PC-3 (cell line): ENCODE measurements at regions of chr2 and their contacts with region 1.

Region 1: DNA sequence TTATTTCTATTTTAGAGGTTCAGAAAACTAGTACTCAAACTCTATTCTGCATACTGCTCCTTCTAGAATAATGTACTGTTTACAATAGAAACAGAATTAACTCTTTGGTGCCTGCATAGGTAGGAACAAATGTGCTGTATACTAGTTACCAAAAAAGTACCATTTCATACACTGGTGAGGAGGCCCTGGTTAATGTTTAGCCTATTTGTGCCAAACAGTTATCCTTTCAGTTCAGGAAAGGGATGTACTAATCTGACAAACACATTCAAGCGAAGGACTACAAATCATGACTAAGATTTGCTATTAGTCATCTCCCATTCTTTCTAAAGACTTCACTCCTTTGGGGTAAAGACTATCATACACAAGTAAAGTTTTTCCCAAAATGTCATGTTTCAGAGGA is 47.4 kb downstream of the EXOC6B start:
- DNase-seq: peak; percentile 84
- ATAC-seq: peak; percentile 90
- H3K4me3 ChIP-seq: no peak overlapping the region
- H3K27ac ChIP-seq: peak overlapping the region; percentile 2; the same call in 1 of the 2 replicates
- H3K4me1 ChIP-seq: peaks cover 30% of the 10 kb centered on the region
- H3K27me3 ChIP-seq: no peaks in the 10 kb centered on the region
- CTCF ChIP-seq: no peak

Region 2: DNA sequence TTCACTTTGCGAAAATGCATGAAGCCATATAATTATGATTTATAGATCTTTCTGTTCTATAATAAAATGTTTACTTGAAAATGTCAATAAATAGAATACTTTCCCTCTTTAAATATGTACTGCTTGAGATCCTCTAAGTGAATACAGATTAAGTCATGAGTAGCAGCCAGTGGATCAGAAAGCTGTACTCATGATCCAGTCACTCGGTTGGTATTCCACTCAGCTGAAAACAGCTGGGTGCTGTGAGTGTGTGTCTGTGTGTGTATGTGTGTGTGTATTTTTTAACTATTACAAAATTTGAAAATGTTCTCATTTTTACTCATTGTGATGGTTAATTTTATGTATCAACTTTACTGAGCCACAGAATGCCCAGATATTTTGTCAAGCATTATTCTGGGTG is 489.1 kb before region 1 on chr2:
- CTCF ChIA-PET with region 1: no interaction called
- POLR2A ChIA-PET with region 1: no interaction called
- intact Hi-C with region 1: no loop called
- DNase-seq: peak; percentile 26
- ATAC-seq: no peak
- H3K4me3 ChIP-seq: no peak overlapping the region
- H3K27ac ChIP-seq: peak overlapping the region; percentile 63
- H3K4me1 ChIP-seq: peaks cover 30% of the 10 kb centered on the region
- H3K27me3 ChIP-seq: no peaks in the 10 kb centered on the region
- CTCF ChIP-seq: no peak

Region 3: GRCh38 chr2:72757177-72757775 is 21.1 kb before region 1 on chr2:
- CTCF ChIA-PET with region 1: no interaction called
- POLR2A ChIA-PET with region 1: no interaction called
- intact Hi-C with region 1: no loop called
- DNase-seq: no peak
- ATAC-seq: no peak
- H3K4me3 ChIP-seq: no peak overlapping the region
- H3K27ac ChIP-seq: no peak overlapping the region
- H3K4me1 ChIP-seq: no peaks in the 10 kb centered on the region
- H3K27me3 ChIP-seq: no peaks in the 10 kb centered on the region
- CTCF ChIP-seq: no peak

Region 4: DNA sequence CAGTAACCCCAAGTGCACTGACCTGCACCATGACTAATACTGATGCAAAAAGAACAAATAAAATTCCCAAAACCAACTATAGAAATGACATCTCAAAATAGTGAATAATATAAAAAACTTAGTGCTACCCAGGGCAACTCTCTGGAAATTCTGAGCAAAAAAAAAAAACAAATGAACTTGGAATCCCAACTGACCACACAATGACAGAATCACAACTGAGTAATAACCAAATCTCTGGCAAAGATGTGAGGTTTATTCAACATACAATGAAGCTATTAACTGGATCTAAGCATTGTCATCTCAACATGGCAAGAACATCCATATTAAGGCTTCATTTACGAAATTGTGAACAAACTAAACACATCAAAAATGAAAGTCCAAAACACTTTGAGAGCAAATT is 24.7 kb after region 1 on chr2:
- CTCF ChIA-PET with region 1: interaction called, 3 read pairs
- POLR2A ChIA-PET with region 1: no interaction called
- intact Hi-C with region 1: loop called (anchors 1 kb)
- DNase-seq: peak; percentile 44
- ATAC-seq: peak; percentile 45
- H3K4me3 ChIP-seq: no peak overlapping the region
- H3K27ac ChIP-seq: no peak overlapping the region
- H3K4me1 ChIP-seq: peaks cover 8% of the 10 kb centered on the region; the same call in 1 of the 2 replicates
- H3K27me3 ChIP-seq: no peaks in the 10 kb centered on the region
- CTCF ChIP-seq: no peak

Region 5: DNA sequence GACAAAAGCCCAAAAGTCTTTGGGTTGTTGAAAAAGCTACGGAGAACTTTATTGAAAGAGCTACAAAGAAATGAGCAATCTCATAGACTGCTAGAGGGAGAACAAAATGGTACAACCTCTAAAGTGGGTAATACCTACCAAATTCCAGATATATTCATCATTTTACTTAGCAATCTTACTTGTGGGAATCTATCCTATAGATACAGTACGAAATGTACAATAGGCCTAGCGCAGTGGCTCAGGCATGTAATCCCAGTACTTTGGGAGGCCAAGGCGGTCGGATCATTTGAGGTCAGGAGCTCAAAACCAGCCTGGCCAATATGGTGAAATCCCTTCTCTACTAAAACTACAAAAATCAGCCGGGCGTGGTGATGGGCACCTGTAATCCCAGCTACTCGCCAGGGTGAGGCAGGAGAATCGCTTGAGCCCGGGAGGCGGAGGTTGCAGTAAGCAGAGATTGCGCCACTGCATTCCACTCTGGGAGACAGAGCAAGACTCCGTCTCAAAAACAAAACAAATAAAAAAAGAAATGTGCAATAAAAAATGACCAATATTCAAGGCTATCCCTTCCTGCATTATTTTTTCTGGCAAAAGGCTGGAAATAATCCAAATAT is 37.4 kb after region 1 on chr2:
- CTCF ChIA-PET with region 1: no interaction called
- POLR2A ChIA-PET with region 1: no interaction called
- intact Hi-C with region 1: loop called (anchors 5 kb)
- DNase-seq: no peak
- ATAC-seq: no peak
- H3K4me3 ChIP-seq: no peak overlapping the region
- H3K27ac ChIP-seq: no peak overlapping the region
- H3K4me1 ChIP-seq: peaks cover 4% of the 10 kb centered on the region
- H3K27me3 ChIP-seq: no peaks in the 10 kb centered on the region
- CTCF ChIP-seq: no peak

Region 6: GRCh38 chr2:72846538-72847095 is 68.2 kb after region 1 on chr2:
- CTCF ChIA-PET with region 1: no interaction called
- POLR2A ChIA-PET with region 1: no interaction called
- intact Hi-C with region 1: no loop called
- DNase-seq: no peak
- ATAC-seq: no peak
- H3K4me3 ChIP-seq: no peak overlapping the region
- H3K27ac ChIP-seq: no peak overlapping the region
- H3K4me1 ChIP-seq: no peaks in the 10 kb centered on the region
- H3K27me3 ChIP-seq: peaks cover 12% of the 10 kb centered on the region; the same call in 1 of the 2 replicates
- CTCF ChIP-seq: no peak